ENCODE measurements at regions of chr18 and their contacts with region 1.

Region 1: GRCh38 chr18:38367473-38367872 is 801.9 kb upstream of the CELF4 start:
- DNase-seq: no peak
- ATAC-seq: no peak
- H3K4me3 Mint-ChIP-seq: no peak overlapping the region
- H3K27ac Mint-ChIP-seq: no peak overlapping the region
- H3K4me1 Mint-ChIP-seq: no peaks in the 10 kb centered on the region
- H3K27me3 Mint-ChIP-seq: no peaks in the 10 kb centered on the region
- CTCF ChIP-seq: no peak

Region 2: DNA sequence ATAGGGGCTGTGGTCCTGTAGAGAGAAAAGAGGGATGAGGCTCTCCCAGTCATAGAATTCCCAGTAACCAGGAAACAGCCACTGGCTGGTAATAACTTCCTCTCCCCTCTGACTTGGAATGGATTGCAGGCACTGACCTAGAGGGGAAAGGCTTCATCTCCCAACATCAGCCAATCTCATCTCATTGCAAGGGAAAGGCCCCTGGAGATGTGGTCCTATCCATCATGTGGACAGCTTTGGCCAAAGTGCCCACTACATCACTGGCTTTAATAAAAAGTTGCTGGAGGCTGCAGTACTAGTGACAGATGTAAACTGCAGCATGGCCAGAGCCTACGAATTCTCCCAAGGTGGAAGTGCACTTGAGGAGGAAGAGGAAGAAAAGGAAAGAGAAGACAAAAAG is 18.7 kb after region 1 on chr18:
- CTCF ChIA-PET with region 1: no interaction called
- POLR2A ChIA-PET with region 1: no interaction called
- intact Hi-C with region 1: no loop called
- DNase-seq: no peak
- ATAC-seq: no peak
- H3K4me3 Mint-ChIP-seq: no peak overlapping the region
- H3K27ac Mint-ChIP-seq: no peak overlapping the region
- H3K4me1 Mint-ChIP-seq: no peaks in the 10 kb centered on the region
- H3K27me3 Mint-ChIP-seq: no peaks in the 10 kb centered on the region
- CTCF ChIP-seq: no peak

Region 3: GRCh38 chr18:39635966-39636365 is 1268.5 kb after region 1 on chr18:
- CTCF ChIA-PET with region 1: no interaction called
- POLR2A ChIA-PET with region 1: interaction called, 10 read pairs
- intact Hi-C with region 1: no loop called
- DNase-seq: no peak
- ATAC-seq: no peak
- H3K4me3 Mint-ChIP-seq: no peak overlapping the region
- H3K27ac Mint-ChIP-seq: no peak overlapping the region
- H3K4me1 Mint-ChIP-seq: no peaks in the 10 kb centered on the region
- H3K27me3 Mint-ChIP-seq: no peaks in the 10 kb centered on the region
- CTCF ChIP-seq: no peak

Measured in activated B cell treated with CpG ODN at 0.5 μM for 24 hours (primary cell).